Astrocyte of the cerebellum (primary cell): ENCODE measurements at regions of chr9 and their contacts with region 1.

Region 1: DNA sequence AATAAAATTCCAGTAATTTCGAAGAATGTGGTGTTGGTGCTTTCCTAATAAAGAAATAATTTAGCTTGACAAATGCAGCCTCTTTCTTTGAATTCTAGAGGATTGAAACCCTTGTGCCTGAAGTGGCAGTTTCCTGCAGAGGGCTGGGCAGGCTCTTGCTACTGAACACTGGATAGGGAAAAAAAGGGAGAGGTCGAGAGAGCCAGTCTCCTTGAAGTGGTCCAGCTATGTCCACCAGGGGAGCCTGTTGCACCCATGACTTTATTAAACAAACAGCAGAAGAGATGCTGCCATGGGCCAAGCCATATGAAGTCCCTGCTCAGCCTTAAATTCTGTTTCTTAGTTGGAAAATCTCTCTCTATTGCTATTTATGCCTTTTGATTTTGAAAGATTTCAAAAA is 178.4 kb downstream of the SMARCA2 start:
- DNase-seq: no peak
- H3K4me3 ChIP-seq: no peak overlapping the region
- CTCF ChIP-seq: no peak

Region 2: DNA sequence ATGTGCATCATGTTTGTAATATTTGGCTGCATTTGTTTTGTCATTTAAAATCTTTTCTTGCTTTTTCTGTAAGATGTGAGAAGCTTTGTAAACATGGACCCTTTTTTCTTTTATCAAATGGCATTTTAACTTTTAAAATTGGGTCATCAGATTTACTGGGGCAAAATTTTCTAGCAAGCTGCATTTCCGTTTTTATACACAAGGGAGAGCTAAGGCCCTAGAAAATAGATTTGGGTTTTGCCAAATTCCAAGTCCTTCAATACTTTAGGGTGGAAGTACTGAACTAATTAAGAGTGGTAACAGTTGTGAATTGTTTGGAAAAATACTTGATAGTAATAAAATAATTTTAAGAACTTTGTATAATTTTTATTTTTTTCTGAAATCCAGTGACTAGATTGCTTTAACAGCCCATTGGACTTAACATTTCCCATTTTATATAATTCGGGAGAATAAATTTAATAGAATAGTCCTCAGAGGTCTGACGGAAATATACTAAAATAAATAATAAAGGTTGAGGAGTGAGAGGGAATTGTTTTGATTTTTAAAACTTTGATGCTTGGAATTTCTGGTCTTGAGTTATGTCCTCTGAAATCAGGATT is 61.0 kb before region 1 on chr9:
- in situ Hi-C with region 1: no loop called
- DNase-seq: no peak
- H3K4me3 ChIP-seq: no peak overlapping the region
- CTCF ChIP-seq: peak; percentile 71

Region 3: DNA sequence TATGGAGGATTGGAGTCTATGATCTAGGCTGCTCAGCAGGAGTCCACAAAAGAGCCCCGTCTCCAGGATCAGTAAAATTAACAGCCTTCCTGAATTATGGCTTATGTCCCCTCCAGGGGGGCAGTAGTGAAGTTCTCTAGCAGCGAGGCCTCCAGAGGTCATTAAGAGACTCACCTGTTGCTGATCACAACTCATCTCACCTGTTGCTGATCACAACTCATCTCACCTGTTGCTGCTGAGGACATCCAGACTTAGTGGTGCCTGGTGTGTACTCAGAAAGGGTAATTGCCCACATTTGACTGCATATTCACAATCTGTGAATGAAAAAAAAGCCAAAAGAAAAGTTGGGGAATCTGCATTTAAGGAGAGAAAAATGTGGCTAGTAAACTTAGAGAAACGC is 48.9 kb before region 1 on chr9:
- in situ Hi-C with region 1: no loop called
- DNase-seq: no peak
- H3K4me3 ChIP-seq: no peak overlapping the region
- CTCF ChIP-seq: no peak

Region 4: DNA sequence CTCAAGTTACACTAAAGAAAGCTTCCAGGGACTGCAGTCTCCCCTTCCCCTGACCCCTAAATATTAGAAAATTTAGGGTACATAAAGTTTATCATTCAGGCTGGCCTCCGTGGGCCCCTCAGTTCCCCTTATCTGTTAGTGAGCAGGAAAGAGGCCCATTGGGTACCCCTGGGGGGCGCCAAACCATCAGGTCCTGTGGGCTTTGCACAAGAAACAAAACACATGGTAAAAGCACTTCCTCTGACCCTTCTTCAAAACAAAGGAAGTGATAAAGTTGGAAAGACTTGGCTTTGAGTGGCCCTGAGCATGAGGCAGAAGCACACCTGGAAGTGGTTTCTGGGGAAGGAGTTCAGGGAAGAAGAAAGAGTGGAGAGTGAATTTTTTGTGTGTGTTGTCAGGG is 34.6 kb after region 1 on chr9:
- in situ Hi-C with region 1: loop called (anchors 5 kb)
- DNase-seq: no peak
- H3K4me3 ChIP-seq: no peak overlapping the region
- CTCF ChIP-seq: peak; percentile 41

Region 5: DNA sequence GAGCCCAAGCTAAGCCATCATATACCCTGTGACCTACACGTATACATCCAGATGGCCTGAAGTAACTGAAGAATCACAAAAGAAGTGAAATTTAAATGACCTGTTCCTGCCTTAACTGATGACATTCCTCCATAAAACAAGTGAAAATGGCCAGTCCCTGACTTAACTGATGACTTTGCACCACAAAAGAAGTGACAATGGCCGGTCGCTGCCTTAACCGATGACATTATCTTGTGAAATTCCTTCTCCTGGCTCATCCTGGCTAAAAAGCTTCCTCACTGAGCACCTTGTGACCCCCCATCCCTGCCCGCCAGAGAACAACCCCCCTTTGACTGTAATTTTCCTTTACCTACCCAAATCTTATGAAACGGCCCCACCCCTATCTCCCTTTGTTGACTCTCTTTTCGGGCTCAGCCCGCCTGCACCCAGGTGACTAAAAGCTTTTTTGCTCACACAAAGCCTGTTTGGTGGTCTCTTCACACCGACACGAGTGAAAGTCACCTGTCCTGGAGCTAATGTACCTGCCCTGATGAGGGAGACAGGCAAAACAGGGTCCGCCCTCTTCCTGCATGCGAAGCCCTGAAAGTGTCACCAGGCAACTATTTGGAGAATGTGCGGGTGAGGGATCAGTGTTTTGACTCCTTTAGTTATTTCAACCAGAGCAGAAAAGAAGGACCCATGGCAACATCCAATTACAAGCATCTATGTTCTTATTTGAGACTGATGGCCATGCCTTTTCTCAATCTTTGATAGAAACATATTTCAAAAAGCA is 87.7 kb after region 1 on chr9:
- in situ Hi-C with region 1: no loop called
- DNase-seq: no peak
- H3K4me3 ChIP-seq: no peak overlapping the region
- CTCF ChIP-seq: no peak